Naive thymus-derived CD4-positive, alpha-beta T cell (primary cell): ENCODE measurements at regions of chr5 and their contacts with region 1.

Region 1: DNA sequence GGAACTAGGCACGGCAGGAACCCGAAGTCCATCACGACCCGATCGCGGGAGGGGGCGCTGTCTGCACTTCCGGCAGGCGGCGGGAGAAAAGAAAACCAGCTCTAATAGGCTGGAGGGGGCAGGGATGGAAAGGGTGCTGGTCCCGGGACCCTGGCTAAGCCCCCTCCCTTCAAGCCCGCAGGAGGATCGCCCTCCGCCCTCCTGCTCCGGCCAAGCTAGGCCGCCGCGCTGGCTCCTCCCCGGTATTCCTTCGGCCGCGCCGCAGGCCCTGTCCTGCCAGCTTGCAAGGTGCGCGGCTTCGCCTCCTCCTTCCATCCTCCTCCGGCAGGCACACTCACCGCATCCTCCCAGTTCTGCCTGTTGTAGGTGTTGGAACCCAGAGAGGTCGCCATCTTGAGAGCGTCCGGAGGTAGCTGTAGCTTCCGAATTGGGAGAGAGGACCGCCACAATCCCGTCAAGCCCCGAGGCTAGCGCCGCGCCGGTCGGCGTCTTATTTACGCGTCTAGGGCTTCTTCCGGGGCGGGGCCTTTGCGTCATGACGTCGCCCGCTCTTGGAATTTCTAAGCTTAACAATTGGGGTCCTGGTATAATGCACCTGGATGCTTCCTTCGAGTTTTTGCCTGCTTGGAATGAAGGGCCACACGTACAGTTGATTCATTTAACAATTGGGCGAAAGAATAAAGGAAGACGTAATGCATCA is at the start of gene RBM22:
- DNase-seq: peak; percentile 77 to 93 (median 92)
- ATAC-seq: peak; percentile 96
- H3K4me3 ChIP-seq: peak within 1 kb of the TSS; percentile 80
- H3K4me3 Mint-ChIP-seq: no peak within 1 kb of the TSS
- H3K27ac ChIP-seq: peak within 1 kb of the TSS; percentile 96
- H3K27ac Mint-ChIP-seq: no peak within 1 kb of the TSS
- H3K4me1 ChIP-seq: peaks cover 13 to 14% of the 10 kb centered on the region in 2 donors
- H3K4me1 Mint-ChIP-seq: peaks cover 0 to 12% (median 7%) of the 10 kb centered on the region in 7 donors
- H3K27me3 ChIP-seq: no peaks in the 10 kb centered on the region
- H3K27me3 Mint-ChIP-seq: peaks cover 0 to 3% (median 0%) of the 10 kb centered on the region in 5 donors
- total RNA-seq, gene RBM22: 74.2 to 103 (median 93.1) TPM

Region 2: DNA sequence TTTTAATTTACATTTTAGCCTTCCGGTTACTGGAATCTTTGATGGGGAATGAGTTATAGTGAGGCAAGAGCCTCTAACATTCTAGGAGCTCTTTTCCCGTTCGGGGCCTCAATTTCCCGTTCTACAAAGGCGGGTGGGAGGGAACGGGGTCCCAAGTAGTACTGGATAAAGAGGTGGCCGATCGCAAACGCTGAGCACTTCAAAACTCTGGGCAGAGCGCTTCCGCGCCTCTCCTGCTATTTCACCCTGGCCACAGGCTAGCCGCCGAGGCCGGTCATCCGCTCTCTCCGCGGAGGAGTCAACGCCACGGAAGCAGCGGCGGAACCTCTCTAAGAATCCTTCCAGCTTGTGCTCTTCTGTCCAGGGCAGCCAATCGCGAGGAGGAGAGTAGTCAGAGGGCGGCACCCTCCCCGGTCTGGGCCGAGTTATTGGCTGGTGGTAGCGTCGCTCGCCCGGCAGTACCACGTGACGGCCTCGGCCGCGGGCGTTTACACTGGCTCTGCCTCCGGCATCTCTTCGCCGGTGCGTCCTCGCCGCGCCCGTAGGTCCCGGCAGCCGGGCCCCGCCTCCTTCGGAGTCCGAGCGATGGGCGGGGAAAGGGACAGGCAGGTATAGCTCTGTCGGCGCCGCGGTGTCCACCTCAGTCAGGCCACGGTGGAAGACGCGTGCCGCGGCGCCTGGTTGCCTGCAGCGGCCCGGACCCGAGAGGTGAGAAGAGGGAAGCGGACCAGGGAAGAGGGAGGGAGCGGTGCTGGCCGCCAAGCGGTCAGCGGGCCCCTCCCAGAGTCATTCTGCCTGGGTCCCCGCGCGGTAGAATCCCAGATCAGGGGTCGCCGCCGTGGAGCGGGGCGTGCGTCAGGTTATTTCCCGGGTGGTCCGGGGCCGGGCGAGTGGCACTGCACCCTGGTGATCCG is 740.2 kb before region 1 on chr5 and contains the start of gene SLC26A2:
- CTCF ChIA-PET with region 1: no interaction called
- POLR2A ChIA-PET with region 1: interaction called, 6 read pairs
- intact Hi-C with region 1: loop called in 1 of 2 experiments (anchors 2 kb)
- DNase-seq: peak; percentile 78 to 92 (median 91)
- ATAC-seq: peak; percentile 99
- H3K4me3 ChIP-seq: peak within 1 kb of the TSS; percentile 98
- H3K4me3 Mint-ChIP-seq: peak within 1 kb of the TSS; percentile 90 to 100 (median 96)
- H3K27ac ChIP-seq: peak within 1 kb of the TSS; percentile 77
- H3K27ac Mint-ChIP-seq: peak within 1 kb of the TSS; percentile 94 to 98 (median 97)
- H3K4me1 ChIP-seq: peaks cover 16 to 28% of the 10 kb centered on the region in 2 donors
- H3K4me1 Mint-ChIP-seq: peaks cover 14 to 43% (median 37%) of the 10 kb centered on the region in 7 donors
- H3K27me3 ChIP-seq: no peaks in the 10 kb centered on the region
- H3K27me3 Mint-ChIP-seq: no peaks in the 10 kb centered on the region
- total RNA-seq, gene SLC26A2: 5.2 to 16.5 (median 9.6) TPM

Region 3: GRCh38 chr5:150409638-150410523 is 290.9 kb before region 1 on chr5:
- CTCF ChIA-PET with region 1: interaction called, 3 read pairs
- POLR2A ChIA-PET with region 1: no interaction called
- intact Hi-C with region 1: loop called (anchors 1 to 2 kb)
- DNase-seq: peak in 7 of 9 donors; percentile 27 to 48 (median 43)
- ATAC-seq: no peak
- H3K4me3 ChIP-seq: peak overlapping the region; percentile 83
- H3K4me3 Mint-ChIP-seq: peak overlapping the region; percentile 91 to 100 (median 98)
- H3K27ac ChIP-seq: peak overlapping the region; percentile 98
- H3K27ac Mint-ChIP-seq: peak overlapping the region; percentile 96 to 100 (median 100)
- H3K4me1 ChIP-seq: peaks cover 32 to 35% of the 10 kb centered on the region in 2 donors
- H3K4me1 Mint-ChIP-seq: peaks cover 24 to 52% (median 38%) of the 10 kb centered on the region in 7 donors
- H3K27me3 ChIP-seq: no peaks in the 10 kb centered on the region
- H3K27me3 Mint-ChIP-seq: no peaks in the 10 kb centered on the region

Region 4: GRCh38 chr5:150560401-150561193 is 140.1 kb before region 1 on chr5:
- CTCF ChIA-PET with region 1: no interaction called
- POLR2A ChIA-PET with region 1: no interaction called
- intact Hi-C with region 1: loop called in 1 of 2 experiments (anchors 2 kb)
- DNase-seq: peak; percentile 48 to 86 (median 78)
- ATAC-seq: peak; percentile 98
- H3K4me3 ChIP-seq: no peak overlapping the region
- H3K4me3 Mint-ChIP-seq: no peak overlapping the region
- H3K27ac ChIP-seq: no peak overlapping the region
- H3K27ac Mint-ChIP-seq: no peak overlapping the region
- H3K4me1 ChIP-seq: no peaks in the 10 kb centered on the region
- H3K4me1 Mint-ChIP-seq: peaks cover 0 to 3% (median 0%) of the 10 kb centered on the region in 7 donors
- H3K27me3 ChIP-seq: no peaks in the 10 kb centered on the region
- H3K27me3 Mint-ChIP-seq: peaks cover 0 to 10% (median 0%) of the 10 kb centered on the region in 5 donors

Region 5: GRCh38 chr5:150734579-150735384 is 34.0 kb after region 1 on chr5:
- CTCF ChIA-PET with region 1: no interaction called
- POLR2A ChIA-PET with region 1: no interaction called
- intact Hi-C with region 1: loop called in 1 of 2 experiments (anchors 5 kb)
- DNase-seq: no peak
- ATAC-seq: peak; percentile 84
- H3K4me3 ChIP-seq: no peak overlapping the region
- H3K4me3 Mint-ChIP-seq: no peak overlapping the region
- H3K27ac ChIP-seq: no peak overlapping the region
- H3K27ac Mint-ChIP-seq: peak overlapping the region in 3 of 9 donors; percentile 59 to 74 (median 68)
- H3K4me1 ChIP-seq: peaks cover 0 to 16% of the 10 kb centered on the region in 2 donors
- H3K4me1 Mint-ChIP-seq: peaks cover 39 to 54% (median 48%) of the 10 kb centered on the region in 7 donors
- H3K27me3 ChIP-seq: no peaks in the 10 kb centered on the region
- H3K27me3 Mint-ChIP-seq: no peaks in the 10 kb centered on the region

Region 6: GRCh38 chr5:150789943-150790611 is 89.3 kb after region 1 on chr5:
- CTCF ChIA-PET with region 1: interaction called, 4 read pairs
- POLR2A ChIA-PET with region 1: interaction called, 10 read pairs
- intact Hi-C with region 1: no loop called
- DNase-seq: peak in 8 of 9 donors; percentile 37 to 73 (median 63)
- ATAC-seq: peak; percentile 94
- H3K4me3 ChIP-seq: no peak overlapping the region
- H3K4me3 Mint-ChIP-seq: peak overlapping the region; percentile 46 to 77 (median 66)
- H3K27ac ChIP-seq: peak overlapping the region; percentile 19
- H3K27ac Mint-ChIP-seq: peak overlapping the region; percentile 63 to 95 (median 85)
- H3K4me1 ChIP-seq: peaks cover 0 to 15% of the 10 kb centered on the region in 2 donors
- H3K4me1 Mint-ChIP-seq: peaks cover 21 to 64% (median 56%) of the 10 kb centered on the region in 7 donors
- H3K27me3 ChIP-seq: no peaks in the 10 kb centered on the region
- H3K27me3 Mint-ChIP-seq: no peaks in the 10 kb centered on the region

Region 7: GRCh38 chr5:151157426-151158286 is 456.9 kb after region 1 on chr5 and contains the start of gene ANXA6:
- CTCF ChIA-PET with region 1: no interaction called
- POLR2A ChIA-PET with region 1: no interaction called
- intact Hi-C with region 1: loop called (anchors 2 to 5 kb)
- DNase-seq: peak; percentile 48 to 79 (median 57)
- ATAC-seq: peak; percentile 92
- H3K4me3 ChIP-seq: peak within 1 kb of the TSS; percentile 85
- H3K4me3 Mint-ChIP-seq: peak within 1 kb of the TSS; percentile 94 to 99 (median 96)
- H3K27ac ChIP-seq: peak within 1 kb of the TSS; percentile 92
- H3K27ac Mint-ChIP-seq: peak within 1 kb of the TSS; percentile 90 to 99 (median 96)
- H3K4me1 ChIP-seq: peaks cover 36 to 44% of the 10 kb centered on the region in 2 donors
- H3K4me1 Mint-ChIP-seq: peaks cover 39 to 69% (median 57%) of the 10 kb centered on the region in 7 donors
- H3K27me3 ChIP-seq: no peaks in the 10 kb centered on the region
- H3K27me3 Mint-ChIP-seq: no peaks in the 10 kb centered on the region
- total RNA-seq, gene ANXA6: 212 to 512 (median 272) TPM